ENCODE measurements at regions of chr10 and their contacts with region 1.

Region 1: GRCh38 chr10:32378363-32379317 is 31.7 kb upstream of the EPC1 start:
- DNase-seq: peak; percentile 93 to 99 (median 97)

Region 2: DNA sequence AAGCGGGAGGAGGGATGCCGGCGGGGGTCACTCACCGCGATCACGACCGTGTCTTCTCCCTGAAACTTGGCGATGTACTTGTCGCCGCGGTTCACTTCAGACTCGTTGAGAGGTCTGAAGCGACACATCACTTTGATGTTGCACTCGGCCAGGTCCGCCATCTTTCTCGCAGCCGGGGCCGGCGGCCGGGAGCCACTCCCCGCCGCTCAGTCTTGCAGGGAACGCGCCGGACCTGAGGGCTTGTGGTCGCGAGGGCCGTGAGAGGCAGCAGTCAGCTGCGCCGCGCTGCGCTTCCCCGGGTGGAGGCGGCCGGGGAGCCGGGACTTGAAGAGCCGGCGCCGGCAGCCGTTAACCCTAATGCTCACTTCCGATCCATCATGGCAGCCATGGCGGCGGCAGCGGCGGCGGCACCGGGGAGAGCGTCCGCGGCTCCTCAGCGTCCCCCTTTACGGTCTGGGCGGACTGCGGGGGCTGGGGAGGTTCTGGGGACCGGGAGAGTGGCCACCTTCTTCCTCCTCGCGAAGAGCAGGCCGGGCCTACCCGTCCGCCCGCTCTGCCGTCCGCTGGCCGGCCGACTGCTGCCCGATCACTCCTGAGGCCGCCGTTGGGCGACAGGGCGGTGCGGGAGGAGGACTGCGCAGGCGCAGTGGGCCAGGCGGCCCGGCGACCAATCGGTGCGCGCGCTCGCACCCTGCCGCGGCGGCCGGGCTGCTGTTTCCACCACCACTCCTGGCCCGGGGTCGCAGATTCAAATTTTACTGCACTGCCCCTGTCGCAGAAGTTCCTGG is 322.6 kb before region 1 on chr10 and contains the start of gene KIF5B:
- intact Hi-C with region 1: loop called (anchors 10 kb)
- DNase-seq: peak; percentile 53 to 95 (median 89)

Region 3: GRCh38 chr10:32256613-32257437 is 121.8 kb before region 1 on chr10:
- intact Hi-C with region 1: no loop called
- DNase-seq: peak in 41 of 42 donors; percentile 23 to 91 (median 71)

Measured in head of caudate nucleus (tissue), 42 donors.